ENCODE measurements at regions of chr1 and their contacts with region 1.

Region 1: GRCh38 chr1:29124366-29125236 is 898 bp upstream of the TMEM200B start:
- DNase-seq: peak; percentile 46
- H3K4me3 Mint-ChIP-seq: peak overlapping the region; percentile 82
- H3K27ac Mint-ChIP-seq: peak overlapping the region; percentile 23
- H3K4me1 Mint-ChIP-seq: no peaks in the 10 kb centered on the region
- H3K27me3 Mint-ChIP-seq: peaks cover 29% of the 10 kb centered on the region

Region 2: DNA sequence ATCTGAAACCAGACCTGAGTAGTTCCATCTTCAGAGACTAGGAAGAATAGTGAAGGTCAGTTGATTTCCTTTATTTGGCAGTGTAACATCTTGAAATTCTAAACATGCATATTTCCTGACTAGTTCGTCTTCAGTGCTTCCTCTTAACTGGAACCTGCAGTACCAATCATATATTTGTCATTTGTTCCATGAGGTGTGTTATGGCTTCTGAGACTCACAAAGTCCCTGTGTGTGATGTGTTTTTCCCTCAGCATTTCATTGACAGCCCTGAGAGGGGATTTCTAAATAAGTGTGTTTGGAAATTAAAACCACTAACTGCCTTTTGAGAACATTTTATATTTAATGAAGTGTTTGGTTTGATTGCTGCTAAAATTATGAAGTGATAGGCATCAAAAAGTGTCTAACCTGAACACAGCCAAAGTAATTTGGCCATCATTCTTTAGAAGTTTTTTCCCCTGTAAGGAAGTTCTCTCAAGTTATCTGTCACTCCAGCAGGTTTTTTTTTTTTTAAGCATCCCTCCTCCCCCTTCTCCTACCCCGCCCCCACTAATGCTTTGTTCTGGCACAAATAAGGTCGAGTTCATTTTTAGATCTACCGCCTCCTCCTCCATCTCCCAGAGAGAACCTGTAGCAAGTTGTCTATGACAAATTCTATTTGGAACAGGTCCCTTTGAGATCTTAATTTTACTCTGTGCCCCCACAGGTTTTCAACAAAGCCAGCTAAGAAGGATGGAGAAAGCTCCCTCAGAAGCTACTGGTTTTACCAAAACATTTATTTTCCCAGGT is 62.3 kb before region 1 on chr1:
- intact Hi-C with region 1: loop called (anchors 1 kb)
- DNase-seq: no peak
- H3K4me3 Mint-ChIP-seq: peak overlapping the region; percentile 46
- H3K27ac Mint-ChIP-seq: peak overlapping the region; percentile 97
- H3K4me1 Mint-ChIP-seq: peaks cover 23% of the 10 kb centered on the region
- H3K27me3 Mint-ChIP-seq: no peaks in the 10 kb centered on the region